Body of pancreas (tissue), 4 donors: ENCODE measurements at regions of chr2 and their contacts with region 1.

Region 1: GRCh38 chr2:24382363-24383073 is 22.2 kb upstream of the ITSN2 start:
- DNase-seq: peak; percentile 59 to 70 (median 64)
- ATAC-seq: peak; percentile 84
- H3K4me3 ChIP-seq: no peak overlapping the region
- H3K27ac ChIP-seq: no peak overlapping the region
- H3K4me1 ChIP-seq: peaks cover 12% of the 10 kb centered on the region
- H3K27me3 ChIP-seq: no peaks in the 10 kb centered on the region
- CTCF ChIP-seq: peak; percentile 58 to 85 (median 73)
- POLR2A ChIP-seq: no peak

Region 2: GRCh38 chr2:24231461-24231881 is 151.0 kb before region 1 on chr2:
- intact Hi-C with region 1: loop called (anchors 10 kb)
- DNase-seq: no peak
- ATAC-seq: no peak
- H3K4me3 ChIP-seq: no peak overlapping the region
- H3K27ac ChIP-seq: no peak overlapping the region
- H3K4me1 ChIP-seq: no peaks in the 10 kb centered on the region
- H3K27me3 ChIP-seq: no peaks in the 10 kb centered on the region
- CTCF ChIP-seq: no peak
- POLR2A ChIP-seq: no peak

Region 3: DNA sequence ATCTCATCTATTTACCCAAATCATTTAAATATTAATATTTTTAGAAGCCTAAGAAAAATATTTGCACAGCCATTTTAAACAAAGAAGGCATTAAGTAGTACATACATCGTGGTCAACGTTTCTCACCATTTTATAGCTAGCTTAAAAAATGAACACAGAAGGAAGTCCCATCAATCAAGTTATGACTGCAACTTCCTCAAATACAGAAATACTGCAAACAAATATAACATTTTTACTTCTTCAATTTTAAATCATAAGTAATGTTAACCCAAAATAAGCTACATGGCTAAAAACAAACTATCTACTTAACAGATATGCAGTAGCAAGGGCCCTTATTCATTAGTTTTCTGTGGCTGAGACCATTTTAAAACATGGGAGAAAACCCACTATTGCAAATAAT is 52.8 kb before region 1 on chr2:
- intact Hi-C with region 1: no loop called
- DNase-seq: no peak
- ATAC-seq: no peak
- H3K4me3 ChIP-seq: no peak overlapping the region
- H3K27ac ChIP-seq: peak overlapping the region in 1 of 4 donors; percentile 52
- H3K4me1 ChIP-seq: peaks cover 62% of the 10 kb centered on the region
- H3K27me3 ChIP-seq: no peaks in the 10 kb centered on the region
- CTCF ChIP-seq: no peak
- POLR2A ChIP-seq: no peak

Region 4: DNA sequence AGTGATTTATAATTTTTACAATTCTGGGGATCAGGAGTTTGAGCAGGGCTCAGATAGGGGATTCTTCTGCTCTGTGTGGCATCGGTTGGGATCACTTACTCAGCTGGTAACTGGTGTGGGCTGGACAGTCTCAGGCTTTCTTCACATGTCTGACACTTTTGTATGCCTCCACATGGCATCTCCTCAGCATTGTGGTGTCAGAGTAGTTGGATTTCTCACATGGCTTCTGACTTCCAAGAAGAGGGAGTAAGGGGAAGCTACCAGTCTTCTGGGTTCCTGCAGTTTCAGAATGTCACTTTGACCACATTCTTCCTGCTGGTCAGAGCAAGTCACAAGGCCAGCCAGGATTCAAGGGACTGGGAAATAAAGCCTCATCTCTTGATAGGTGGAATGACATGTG is 164.2 kb after region 1 on chr2:
- intact Hi-C with region 1: no loop called
- DNase-seq: no peak
- ATAC-seq: no peak
- H3K4me3 ChIP-seq: no peak overlapping the region
- H3K27ac ChIP-seq: no peak overlapping the region
- H3K4me1 ChIP-seq: no peaks in the 10 kb centered on the region
- H3K27me3 ChIP-seq: no peaks in the 10 kb centered on the region
- CTCF ChIP-seq: no peak
- POLR2A ChIP-seq: no peak